CD8-positive, alpha-beta T cell (primary cell): ENCODE measurements at regions of chr13 and their contacts with region 1.

Region 1: GRCh38 chr13:103640606-103641005 is 574.4 kb upstream of the SLC10A2 start:
- DNase-seq: no peak
- ATAC-seq: no peak
- H3K4me3 ChIP-seq: no peak overlapping the region
- H3K4me3 Mint-ChIP-seq: no peak overlapping the region
- H3K27ac ChIP-seq: no peak overlapping the region
- H3K27ac Mint-ChIP-seq: no peak overlapping the region
- H3K4me1 ChIP-seq: no peaks in the 10 kb centered on the region
- H3K4me1 Mint-ChIP-seq: no peaks in the 10 kb centered on the region
- H3K27me3 ChIP-seq: no peaks in the 10 kb centered on the region
- H3K27me3 Mint-ChIP-seq: no peaks in the 10 kb centered on the region
- CTCF ChIP-seq: no peak

Region 2: DNA sequence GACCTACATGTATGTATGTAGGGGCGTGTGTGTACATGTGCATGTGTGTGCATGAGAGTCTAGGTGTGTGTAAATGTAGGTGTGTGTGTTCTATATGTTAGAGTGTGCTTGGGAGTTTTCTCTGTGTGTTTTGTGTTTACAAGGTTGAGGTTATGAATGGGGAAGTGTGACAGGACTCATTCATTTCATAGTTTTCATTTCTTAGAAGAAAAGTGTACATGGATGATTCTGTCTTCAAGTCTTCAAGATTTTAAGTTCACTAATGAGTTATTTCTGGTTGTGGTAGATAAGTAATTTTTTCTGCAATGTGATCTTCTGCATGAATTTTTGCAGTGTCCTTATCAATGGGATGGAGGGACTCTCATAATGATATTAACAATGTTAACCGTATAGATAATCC is 456.2 kb before region 1 on chr13:
- CTCF ChIA-PET with region 1: no interaction called
- POLR2A ChIA-PET with region 1: no interaction called
- intact Hi-C with region 1: loop called in 1 of 2 experiments (anchors 5 kb)
- DNase-seq: no peak
- ATAC-seq: no peak
- H3K4me3 ChIP-seq: no peak overlapping the region
- H3K4me3 Mint-ChIP-seq: no peak overlapping the region
- H3K27ac ChIP-seq: no peak overlapping the region
- H3K27ac Mint-ChIP-seq: no peak overlapping the region
- H3K4me1 ChIP-seq: no peaks in the 10 kb centered on the region
- H3K4me1 Mint-ChIP-seq: no peaks in the 10 kb centered on the region
- H3K27me3 ChIP-seq: no peaks in the 10 kb centered on the region
- H3K27me3 Mint-ChIP-seq: no peaks in the 10 kb centered on the region
- CTCF ChIP-seq: no peak

Region 3: GRCh38 chr13:103625194-103625593 is 15.4 kb before region 1 on chr13:
- CTCF ChIA-PET with region 1: no interaction called
- POLR2A ChIA-PET with region 1: no interaction called
- intact Hi-C with region 1: no loop called
- DNase-seq: no peak
- ATAC-seq: no peak
- H3K4me3 ChIP-seq: no peak overlapping the region
- H3K4me3 Mint-ChIP-seq: no peak overlapping the region
- H3K27ac ChIP-seq: no peak overlapping the region
- H3K27ac Mint-ChIP-seq: no peak overlapping the region
- H3K4me1 ChIP-seq: no peaks in the 10 kb centered on the region
- H3K4me1 Mint-ChIP-seq: no peaks in the 10 kb centered on the region
- H3K27me3 ChIP-seq: no peaks in the 10 kb centered on the region
- H3K27me3 Mint-ChIP-seq: no peaks in the 10 kb centered on the region
- CTCF ChIP-seq: no peak

Region 4: GRCh38 chr13:103656311-103656710 is 15.7 kb after region 1 on chr13:
- CTCF ChIA-PET with region 1: no interaction called
- POLR2A ChIA-PET with region 1: no interaction called
- intact Hi-C with region 1: no loop called
- DNase-seq: no peak
- ATAC-seq: no peak
- H3K4me3 ChIP-seq: no peak overlapping the region
- H3K4me3 Mint-ChIP-seq: no peak overlapping the region
- H3K27ac ChIP-seq: no peak overlapping the region
- H3K27ac Mint-ChIP-seq: no peak overlapping the region
- H3K4me1 ChIP-seq: no peaks in the 10 kb centered on the region
- H3K4me1 Mint-ChIP-seq: no peaks in the 10 kb centered on the region
- H3K27me3 ChIP-seq: no peaks in the 10 kb centered on the region
- H3K27me3 Mint-ChIP-seq: no peaks in the 10 kb centered on the region
- CTCF ChIP-seq: no peak